Heart left ventricle (tissue), 16 donors: ENCODE measurements at regions of chr6 and their contacts with region 1.

Region 1: DNA sequence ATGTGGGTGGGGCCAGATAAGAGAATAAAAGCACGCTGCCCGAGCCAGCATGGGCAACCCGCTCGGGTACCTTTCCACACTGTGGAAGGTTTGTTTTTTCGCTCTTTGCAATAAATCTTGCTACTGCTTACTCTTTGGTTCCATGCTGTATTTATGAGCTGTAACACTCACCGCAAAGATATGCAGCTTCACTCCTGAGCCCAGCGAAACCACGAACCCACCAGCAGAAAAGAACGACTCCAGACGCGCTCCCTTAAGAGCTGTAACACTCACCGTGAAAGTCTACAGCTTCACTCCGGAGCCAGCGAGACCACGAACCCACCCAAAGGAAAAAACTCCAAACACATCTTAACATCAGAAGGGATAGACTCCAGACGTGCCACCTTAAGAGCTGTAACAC is 76.7 kb downstream of the TFAP2A start:
- DNase-seq: no peak
- ATAC-seq: no peak
- H3K4me3 ChIP-seq: no peak overlapping the region
- H3K27ac ChIP-seq: no peak overlapping the region
- H3K4me1 ChIP-seq: no peaks in the 10 kb centered on the region
- H3K27me3 ChIP-seq: peaks cover 0 to 10% (median 0%) of the 10 kb centered on the region in 9 donors
- CTCF ChIP-seq: no peak
- POLR2A ChIP-seq: no peak

Region 2: GRCh38 chr6:10381133-10381829 is 43.1 kb after region 1 on chr6:
- intact Hi-C with region 1: no loop called
- DNase-seq: no peak
- ATAC-seq: peak in 2 of 4 donors; percentile 18 to 39
- H3K4me3 ChIP-seq: no peak overlapping the region
- H3K27ac ChIP-seq: no peak overlapping the region
- H3K4me1 ChIP-seq: peaks cover 0 to 26% (median 5%) of the 10 kb centered on the region in 12 donors
- H3K27me3 ChIP-seq: peaks cover 48 to 91% (median 72%) of the 10 kb centered on the region in 9 donors
- CTCF ChIP-seq: no peak
- POLR2A ChIP-seq: no peak

Region 3: DNA sequence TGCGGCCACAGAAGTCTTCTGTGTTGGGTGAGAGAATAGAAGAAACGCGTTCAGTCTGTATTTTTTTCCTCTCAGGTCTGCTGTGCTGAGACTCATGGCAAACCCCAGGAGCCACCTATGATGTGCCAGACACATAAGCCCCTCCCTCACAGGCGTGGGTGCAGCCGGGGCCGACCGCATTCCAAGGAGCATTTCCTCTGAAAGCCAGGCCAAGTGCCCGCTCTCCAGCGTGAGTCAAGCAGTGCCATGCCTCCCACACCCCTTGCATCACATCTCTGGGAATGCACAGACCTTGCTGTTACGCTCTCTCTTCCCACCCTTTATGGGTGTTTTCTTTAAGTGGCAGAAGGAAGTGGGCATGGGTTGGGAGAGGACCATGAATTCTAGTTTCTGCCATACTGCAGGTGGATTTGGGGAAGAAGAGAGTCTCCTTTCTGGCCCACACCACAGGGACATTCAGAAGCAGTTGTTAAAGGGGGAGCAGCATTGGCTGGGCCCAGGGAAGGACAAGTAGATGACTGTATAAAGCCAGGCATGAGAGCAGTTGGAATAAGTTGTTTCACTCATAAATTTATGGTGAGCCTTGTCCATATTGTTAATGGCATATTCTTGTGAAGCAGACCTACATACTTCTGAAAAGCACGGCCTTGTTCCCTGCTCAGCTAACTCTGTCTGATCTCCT is 113.8 kb after region 1 on chr6:
- intact Hi-C with region 1: loop called in 1 of 10 experiments (anchors 5 kb)
- DNase-seq: no peak
- ATAC-seq: no peak
- H3K4me3 ChIP-seq: no peak overlapping the region
- H3K27ac ChIP-seq: no peak overlapping the region
- H3K4me1 ChIP-seq: no peaks in the 10 kb centered on the region
- H3K27me3 ChIP-seq: peaks cover 0 to 31% (median 8%) of the 10 kb centered on the region in 9 donors
- CTCF ChIP-seq: no peak
- POLR2A ChIP-seq: no peak